ENCODE measurements at regions of chr22 and their contacts with region 1.

Region 1: GRCh38 chr22:20079745-20080444 is at the start of gene DGCR8:
- DNase-seq: peak; percentile 96
- H3K4me3 ChIP-seq: peak within 1 kb of the TSS; percentile 80 to 91 (median 88)
- H3K27ac ChIP-seq: peak within 1 kb of the TSS; percentile 88 to 97 (median 94)
- H3K4me1 ChIP-seq: peaks cover 0 to 47% (median 45%) of the 10 kb centered on the region in 4 donors
- H3K27me3 ChIP-seq: no peaks in the 10 kb centered on the region
- CTCF ChIP-seq: no peak
- EP300 ChIP-seq: peak in 1 of 4 donors; percentile 79
- POLR2A ChIP-seq: peak; percentile 13 to 49
- total RNA-seq, gene DGCR8: 15.0 to 32.7 (median 22.2) TPM

Region 2: GRCh38 chr22:19854778-19855503 is 225.0 kb before region 1 on chr22 and contains the starts of genes GNB1L and RTL10:
- intact Hi-C with region 1: no loop called
- DNase-seq: peak; percentile 98
- H3K4me3 ChIP-seq: peak within 1 kb of the TSS; percentile 69 to 95 (median 77)
- H3K27ac ChIP-seq: peak within 1 kb of the TSS; percentile 95 to 97 (median 96)
- H3K4me1 ChIP-seq: peaks cover 0 to 38% (median 27%) of the 10 kb centered on the region in 4 donors
- H3K27me3 ChIP-seq: no peaks in the 10 kb centered on the region
- CTCF ChIP-seq: no peak
- EP300 ChIP-seq: peak in 1 of 4 donors; percentile 26
- POLR2A ChIP-seq: peak; percentile 86 to 91
- total RNA-seq, gene GNB1L: 3.6 to 15.0 (median 5.3) TPM
- total RNA-seq, gene RTL10: 6.6 to 15.0 (median 8.7) TPM

Region 3: GRCh38 chr22:19970479-19971275 is 109.2 kb before region 1 on chr22:
- intact Hi-C with region 1: loop called (anchors 10 kb)
- DNase-seq: peak; percentile 83
- H3K4me3 ChIP-seq: no peak overlapping the region
- H3K27ac ChIP-seq: peak overlapping the region; percentile 4 to 50 (median 30)
- H3K4me1 ChIP-seq: peaks cover 0 to 19% (median 16%) of the 10 kb centered on the region in 4 donors
- H3K27me3 ChIP-seq: no peaks in the 10 kb centered on the region
- CTCF ChIP-seq: peak; percentile 85 to 98 (median 88)
- EP300 ChIP-seq: no peak
- POLR2A ChIP-seq: no peak

Region 4: DNA sequence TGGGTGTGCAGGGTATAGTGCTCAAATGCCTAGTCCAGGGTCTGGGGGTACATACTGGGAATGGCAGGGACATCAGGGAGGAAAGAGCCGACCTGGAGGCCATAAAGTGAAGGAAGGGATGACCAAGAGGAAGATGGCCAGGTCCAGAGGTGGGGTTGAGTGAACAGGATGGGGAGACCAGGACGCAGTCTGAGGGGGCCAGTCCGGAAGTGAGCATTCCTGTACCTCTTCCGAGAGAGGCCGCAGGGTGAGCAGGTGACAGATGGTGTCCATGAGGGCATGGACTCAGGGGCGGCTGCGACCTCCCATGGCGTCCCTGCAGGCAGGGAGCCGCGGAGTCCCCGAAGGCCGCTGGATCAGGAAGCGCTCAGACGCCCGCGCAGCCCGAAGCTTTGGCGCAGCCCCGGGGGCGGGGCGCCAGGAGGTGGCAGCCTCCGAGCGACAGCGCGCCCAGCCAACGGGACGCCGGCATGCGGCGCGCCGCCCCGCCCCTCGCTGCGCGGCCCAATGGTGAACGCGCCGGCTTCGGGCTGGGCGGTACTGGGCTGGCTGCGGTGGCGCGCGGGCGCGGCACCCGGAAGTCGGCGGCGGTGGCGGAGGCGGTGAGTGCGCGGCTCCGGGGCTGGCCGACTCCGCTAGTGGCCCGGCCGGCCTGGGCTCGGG is 59.2 kb before region 1 on chr22 and contains the start of gene TANGO2:
- intact Hi-C with region 1: loop called (anchors 2 kb)
- DNase-seq: peak; percentile 94
- H3K4me3 ChIP-seq: peak within 1 kb of the TSS; percentile 94 to 99 (median 96)
- H3K27ac ChIP-seq: peak within 1 kb of the TSS; percentile 88 to 91 (median 88)
- H3K4me1 ChIP-seq: peaks cover 0 to 43% (median 34%) of the 10 kb centered on the region in 4 donors
- H3K27me3 ChIP-seq: no peaks in the 10 kb centered on the region
- CTCF ChIP-seq: no peak
- EP300 ChIP-seq: no peak
- POLR2A ChIP-seq: peak in 1 of 2 donors; percentile 16
- total RNA-seq, gene TANGO2: 24.2 to 36.6 (median 31.9) TPM

Region 5: GRCh38 chr22:20130739-20131596 is 51.1 kb after region 1 on chr22:
- intact Hi-C with region 1: loop called (anchors 5 kb)
- DNase-seq: peak; percentile 94
- H3K4me3 ChIP-seq: peak overlapping the region; percentile 77 to 100 (median 96)
- H3K27ac ChIP-seq: peak overlapping the region; percentile 91 to 99 (median 99)
- H3K4me1 ChIP-seq: peaks cover 0 to 48% (median 42%) of the 10 kb centered on the region in 4 donors
- H3K27me3 ChIP-seq: no peaks in the 10 kb centered on the region
- CTCF ChIP-seq: no peak
- EP300 ChIP-seq: no peak
- POLR2A ChIP-seq: no peak